ENCODE measurements at regions of chr15 and their contacts with region 1.

Region 1: DNA sequence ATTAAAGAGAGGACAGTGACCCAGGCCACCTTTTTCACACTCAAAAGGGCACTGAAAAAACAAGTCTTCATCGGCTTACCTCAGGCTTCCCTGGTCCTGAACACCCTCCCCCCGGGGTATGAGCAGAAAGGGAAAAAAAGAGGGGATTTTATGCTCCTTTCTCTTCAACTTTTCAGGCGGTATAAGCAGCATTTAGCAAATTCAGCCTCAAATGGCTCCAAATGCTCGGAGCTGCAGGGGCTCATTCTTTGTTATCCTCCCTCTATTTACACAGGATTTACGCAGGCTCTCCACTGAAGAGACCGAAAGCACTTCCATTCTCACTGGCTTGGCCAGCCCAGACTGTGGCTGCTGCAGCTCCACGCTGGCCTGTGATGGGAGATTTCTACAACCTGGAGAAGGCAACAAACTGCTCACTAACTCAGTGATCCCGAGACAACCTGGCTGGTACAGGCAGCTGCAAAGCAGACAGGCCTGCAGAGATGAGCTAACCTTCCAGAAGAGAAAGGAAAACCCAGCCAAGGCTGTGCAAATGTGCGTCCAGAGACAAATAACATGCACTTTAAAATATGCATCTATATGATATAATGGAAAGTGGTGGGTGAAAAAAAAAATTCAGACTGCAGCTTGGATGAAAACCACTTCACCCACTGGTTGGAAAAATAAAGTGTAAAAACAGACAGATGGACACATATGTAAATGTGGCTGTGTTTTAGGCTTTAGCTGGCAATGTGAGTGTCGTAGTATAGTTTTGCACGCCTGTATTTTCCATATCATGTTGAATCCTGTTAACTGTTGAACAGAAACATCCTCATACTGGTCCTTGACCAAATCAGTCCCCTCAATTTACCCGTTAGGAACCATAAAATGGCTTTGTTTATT is 54.2 kb downstream of the MEIS2 start:
- DNase-seq: no peak
- H3K4me3 ChIP-seq: no peak overlapping the region
- H3K27ac ChIP-seq: no peak overlapping the region
- H3K4me1 ChIP-seq: no peaks in the 10 kb centered on the region
- H3K27me3 ChIP-seq: no peaks in the 10 kb centered on the region
- CTCF ChIP-seq: no peak

Region 2: DNA sequence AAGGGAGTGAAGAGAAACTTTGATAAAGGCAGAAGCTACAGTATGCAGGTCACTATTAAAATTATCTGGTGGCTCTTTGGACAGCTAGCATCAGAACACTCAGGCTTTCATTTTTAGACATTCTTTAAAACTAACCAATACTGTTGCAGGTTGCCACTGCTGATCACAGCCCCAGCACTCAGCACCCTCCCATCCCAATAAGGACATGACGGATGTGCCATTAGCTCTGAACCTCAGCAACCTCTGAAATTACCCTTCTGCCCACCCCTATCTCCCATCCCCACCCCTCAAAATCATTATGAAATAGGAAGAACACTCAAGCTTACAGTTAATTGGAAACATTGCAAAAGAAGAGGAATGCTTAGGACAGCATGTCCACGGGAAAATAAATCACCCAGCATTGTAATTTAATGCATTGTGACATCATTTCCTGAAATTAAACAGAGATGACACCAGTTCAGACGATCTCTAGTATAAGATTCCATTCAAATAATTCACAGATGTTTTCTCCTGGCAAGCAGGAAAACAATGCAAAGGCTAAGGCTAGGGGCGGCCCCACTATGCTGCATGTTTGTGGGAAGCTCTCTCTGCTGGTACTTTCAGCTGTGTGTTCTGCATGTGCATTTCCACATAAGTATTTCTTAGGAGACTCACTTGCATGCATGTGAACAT is 17.3 kb before region 1 on chr15:
- CTCF ChIA-PET with region 1: interaction called, 15 read pairs
- POLR2A ChIA-PET with region 1: no interaction called
- intact Hi-C with region 1: no loop called
- DNase-seq: peak; percentile 83
- H3K4me3 ChIP-seq: no peak overlapping the region
- H3K27ac ChIP-seq: peak overlapping the region; percentile 75
- H3K4me1 ChIP-seq: peaks cover 21% of the 10 kb centered on the region
- H3K27me3 ChIP-seq: no peaks in the 10 kb centered on the region
- CTCF ChIP-seq: no peak

Region 3: GRCh38 chr15:37517191-37517895 is 471.2 kb after region 1 on chr15:
- CTCF ChIA-PET with region 1: no interaction called
- POLR2A ChIA-PET with region 1: no interaction called
- intact Hi-C with region 1: no loop called
- DNase-seq: no peak
- H3K4me3 ChIP-seq: no peak overlapping the region
- H3K27ac ChIP-seq: no peak overlapping the region
- H3K4me1 ChIP-seq: no peaks in the 10 kb centered on the region
- H3K27me3 ChIP-seq: no peaks in the 10 kb centered on the region
- CTCF ChIP-seq: no peak

Measured in A673 (cell line).